Activated CD8-positive, alpha-beta T cell treated with anti-CD3 and anti-CD28 coated beads, Interleukin-2, amount 10 ng/mL, durations not matched to agents 7 days and 5 days (primary cell): ENCODE measurements at regions of chr11 and their contacts with region 1.

Region 1: DNA sequence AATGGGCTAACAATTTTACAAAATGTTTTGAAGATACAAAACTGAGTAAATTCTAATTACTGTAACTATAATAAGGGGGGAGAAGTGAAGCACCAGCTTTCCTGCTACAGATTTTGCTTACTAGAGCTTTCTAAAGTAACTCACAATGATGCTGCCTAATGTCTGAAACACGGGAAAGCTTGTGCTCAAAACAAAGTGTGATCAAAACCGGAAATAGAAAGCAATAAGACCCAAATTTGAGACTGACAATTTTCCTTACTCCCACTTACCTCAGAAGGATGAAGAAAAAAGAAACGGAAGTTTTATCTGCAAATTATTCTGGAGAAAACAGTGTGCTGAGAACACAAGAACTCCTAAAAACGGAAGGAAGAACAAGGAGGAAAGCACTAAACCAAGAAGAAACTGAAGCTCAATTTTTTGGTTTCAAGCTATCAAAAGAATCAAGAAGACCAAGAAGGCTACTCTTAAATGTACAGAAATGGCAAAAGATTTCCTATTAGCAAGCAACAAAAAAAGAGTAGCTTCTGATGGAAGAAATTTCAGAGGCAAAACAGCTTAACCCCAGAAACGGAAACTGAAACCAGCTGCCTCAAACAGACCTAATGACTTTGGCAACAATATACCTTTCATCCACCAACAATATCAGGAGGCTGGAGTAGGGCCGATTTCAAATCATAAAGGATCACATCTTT is 33.4 kb downstream of the AMBRA1 start:
- DNase-seq: peak; percentile 61
- ATAC-seq: peak; percentile 83
- H3K4me3 Mint-ChIP-seq: peak overlapping the region; percentile 89
- H3K27ac Mint-ChIP-seq: peak overlapping the region; percentile 96
- H3K4me1 Mint-ChIP-seq: peaks cover 58% of the 10 kb centered on the region
- H3K27me3 Mint-ChIP-seq: no peaks in the 10 kb centered on the region

Region 2: DNA sequence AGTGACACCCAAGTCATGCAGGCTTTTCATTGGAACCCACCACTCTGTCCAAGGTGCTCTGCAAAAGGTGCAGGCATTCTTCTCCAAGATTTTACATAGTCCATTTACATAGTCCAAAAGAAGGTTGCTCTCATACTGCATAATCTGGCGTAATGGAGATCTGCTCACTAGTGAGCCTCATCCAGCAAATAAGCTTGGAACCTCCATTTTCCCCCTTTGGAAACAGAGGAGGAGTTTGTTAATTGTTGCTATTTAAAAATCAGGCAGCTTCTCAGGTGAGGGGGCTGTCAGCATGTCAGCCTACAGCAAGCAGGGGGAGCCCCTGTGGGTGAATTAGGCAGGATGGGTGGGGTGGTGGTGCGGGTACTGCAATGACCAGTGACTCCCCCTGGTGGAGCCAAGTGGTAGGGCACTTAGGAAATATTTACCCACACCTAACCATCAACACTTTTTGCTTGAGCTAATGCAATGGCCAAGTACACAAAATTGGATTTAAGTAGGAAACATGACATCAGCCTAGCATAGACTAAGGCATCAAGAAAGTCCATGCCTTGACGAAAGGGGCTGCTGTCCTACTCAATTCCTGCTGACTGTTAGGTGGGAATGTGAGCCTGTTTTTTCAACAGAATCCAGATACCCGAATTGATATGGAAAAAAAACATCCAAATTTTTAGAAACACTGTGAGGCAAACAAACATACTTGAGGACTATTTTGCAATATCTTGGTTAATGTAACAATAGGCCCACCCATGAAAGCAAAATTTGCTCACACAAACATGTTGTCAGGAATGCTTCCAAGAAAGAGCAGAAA is 31.1 kb before region 1 on chr11:
- CTCF ChIA-PET with region 1: interaction called, 12 read pairs
- POLR2A ChIA-PET with region 1: no interaction called
- DNase-seq: peak; percentile 85
- ATAC-seq: peak; percentile 92
- H3K4me3 Mint-ChIP-seq: no peak overlapping the region
- H3K27ac Mint-ChIP-seq: no peak overlapping the region
- H3K4me1 Mint-ChIP-seq: peaks cover 17% of the 10 kb centered on the region
- H3K27me3 Mint-ChIP-seq: no peaks in the 10 kb centered on the region

Region 3: DNA sequence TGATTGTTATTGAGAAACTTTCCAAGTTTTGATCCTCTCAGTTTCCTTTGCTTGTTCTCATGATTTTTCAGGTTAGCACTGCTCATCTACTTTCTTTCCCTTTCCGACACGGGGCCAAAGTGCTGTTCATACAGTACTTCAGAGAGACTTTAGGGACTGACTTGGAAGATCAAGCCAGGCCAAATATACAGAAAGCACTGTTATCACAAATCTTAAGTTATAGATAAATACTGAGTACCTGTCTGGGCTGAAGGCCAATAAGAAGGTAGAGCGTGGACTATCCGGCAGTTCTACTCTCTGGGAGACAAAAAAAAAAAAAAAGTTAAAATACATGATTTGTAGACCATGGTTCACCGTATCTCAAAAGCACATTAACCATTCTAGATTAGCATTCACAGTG is 12.9 kb before region 1 on chr11:
- CTCF ChIA-PET with region 1: interaction called, 10 read pairs
- POLR2A ChIA-PET with region 1: interaction called, 3 read pairs
- DNase-seq: no peak
- ATAC-seq: no peak
- H3K4me3 Mint-ChIP-seq: no peak overlapping the region
- H3K27ac Mint-ChIP-seq: no peak overlapping the region
- H3K4me1 Mint-ChIP-seq: peaks cover 4% of the 10 kb centered on the region
- H3K27me3 Mint-ChIP-seq: no peaks in the 10 kb centered on the region

Region 4: GRCh38 chr11:46593550-46594373 is 33.3 kb after region 1 on chr11 and contains the start of gene AMBRA1:
- CTCF ChIA-PET with region 1: interaction called, 7 read pairs
- POLR2A ChIA-PET with region 1: interaction called, 12 read pairs
- DNase-seq: peak; percentile 92
- ATAC-seq: peak; percentile 92
- H3K4me3 Mint-ChIP-seq: peak within 1 kb of the TSS; percentile 94
- H3K27ac Mint-ChIP-seq: peak within 1 kb of the TSS; percentile 93
- H3K4me1 Mint-ChIP-seq: peaks cover 52% of the 10 kb centered on the region
- H3K27me3 Mint-ChIP-seq: no peaks in the 10 kb centered on the region
- total RNA-seq, gene AMBRA1: 34.0 to 35.1 TPM

Region 5: GRCh38 chr11:46845740-46846509 is 285.5 kb after region 1 on chr11 and contains the start of gene CKAP5:
- CTCF ChIA-PET with region 1: no interaction called
- POLR2A ChIA-PET with region 1: no interaction called
- DNase-seq: peak; percentile 92
- ATAC-seq: peak; percentile 95
- H3K4me3 Mint-ChIP-seq: peak within 1 kb of the TSS; percentile 81
- H3K27ac Mint-ChIP-seq: peak within 1 kb of the TSS; percentile 96
- H3K4me1 Mint-ChIP-seq: peaks cover 43% of the 10 kb centered on the region
- H3K27me3 Mint-ChIP-seq: no peaks in the 10 kb centered on the region
- total RNA-seq, gene CKAP5: 174 to 176 TPM